WTC11 (cell line): ENCODE measurements at regions of chr15 and their contacts with region 1.

Region 1: DNA sequence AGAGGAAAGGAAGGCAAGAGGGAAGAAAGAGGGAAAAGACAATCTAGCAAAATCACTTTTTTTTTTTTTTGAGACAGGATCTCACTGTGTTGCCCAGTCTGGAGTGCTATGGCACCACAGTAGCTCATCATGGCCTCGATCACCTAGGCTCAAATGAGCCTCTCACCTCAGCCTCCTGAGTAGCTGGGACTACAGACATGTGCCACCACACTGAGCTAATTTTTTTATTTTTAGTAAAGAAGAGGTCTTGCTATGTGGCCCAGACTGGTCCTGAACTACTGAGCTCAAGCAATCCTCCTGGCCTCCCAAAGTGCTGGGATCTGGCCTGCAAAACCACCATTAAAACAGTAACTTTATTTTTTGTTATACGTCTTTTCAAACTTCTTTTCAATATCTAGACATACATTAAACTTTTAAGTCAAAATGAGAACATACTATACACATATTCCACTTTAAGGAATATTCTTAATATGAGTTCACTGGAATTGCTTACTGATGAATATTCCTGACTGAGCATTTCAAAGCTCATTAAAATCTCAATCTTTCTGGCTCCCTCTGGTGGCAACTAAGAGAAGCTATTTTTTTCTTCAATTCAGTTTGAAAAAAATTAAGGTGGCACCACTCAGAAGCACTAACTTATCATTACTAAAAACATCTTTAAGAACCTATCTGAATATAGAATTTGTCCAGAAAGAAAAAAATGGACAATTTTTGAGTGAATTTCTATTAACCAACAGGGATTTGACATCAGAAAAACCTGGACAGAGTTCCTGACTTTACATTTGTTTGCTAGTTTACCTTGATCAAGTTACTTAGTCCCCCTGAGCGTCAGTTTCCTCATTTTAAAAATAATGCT is 40.9 kb downstream of the UACA start:
- DNase-seq: no peak
- ATAC-seq: no peak
- H3K4me3 Mint-ChIP-seq: no peak overlapping the region
- H3K27ac Mint-ChIP-seq: no peak overlapping the region
- H3K4me1 Mint-ChIP-seq: peaks cover 12% of the 10 kb centered on the region
- H3K27me3 Mint-ChIP-seq: no peaks in the 10 kb centered on the region
- CTCF ChIP-seq: peak; percentile 62

Region 2: GRCh38 chr15:70569091-70569621 is 153.3 kb before region 1 on chr15:
- CTCF ChIA-PET with region 1: interaction called, 19 read pairs
- POLR2A ChIA-PET with region 1: no interaction called
- DNase-seq: no peak
- ATAC-seq: peak; percentile 71
- H3K4me3 Mint-ChIP-seq: no peak overlapping the region
- H3K27ac Mint-ChIP-seq: no peak overlapping the region
- H3K4me1 Mint-ChIP-seq: peaks cover 6% of the 10 kb centered on the region
- H3K27me3 Mint-ChIP-seq: no peaks in the 10 kb centered on the region
- CTCF ChIP-seq: no peak

Region 3: GRCh38 chr15:70613271-70613670 is 109.2 kb before region 1 on chr15:
- CTCF ChIA-PET with region 1: no interaction called
- POLR2A ChIA-PET with region 1: no interaction called
- DNase-seq: no peak
- ATAC-seq: no peak
- H3K4me3 Mint-ChIP-seq: no peak overlapping the region
- H3K27ac Mint-ChIP-seq: no peak overlapping the region
- H3K4me1 Mint-ChIP-seq: peaks cover 19% of the 10 kb centered on the region
- H3K27me3 Mint-ChIP-seq: peaks cover 2% of the 10 kb centered on the region; the same call in 1 of the 2 replicates
- CTCF ChIP-seq: no peak

Region 4: DNA sequence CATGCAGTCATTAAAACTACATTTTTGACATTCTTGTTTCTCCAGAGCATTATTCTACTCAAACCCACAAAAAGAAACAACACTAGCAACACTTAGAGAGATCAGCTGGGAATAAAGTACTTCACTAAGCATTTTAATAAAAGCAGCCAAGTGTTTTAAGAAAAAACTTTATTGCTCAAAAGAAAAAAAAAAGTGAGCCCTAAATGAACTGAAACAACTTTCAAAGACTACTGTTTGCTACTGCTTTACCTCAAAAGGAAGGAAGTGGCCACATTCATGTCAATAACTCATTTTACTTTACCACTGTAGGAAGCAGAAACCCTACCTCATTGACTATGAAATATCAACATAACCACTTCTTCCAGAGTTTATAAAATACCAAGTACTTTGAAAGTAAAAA is 50.4 kb before region 1 on chr15:
- CTCF ChIA-PET with region 1: interaction called, 15 read pairs
- POLR2A ChIA-PET with region 1: no interaction called
- DNase-seq: no peak
- ATAC-seq: no peak
- H3K4me3 Mint-ChIP-seq: no peak overlapping the region
- H3K27ac Mint-ChIP-seq: peak overlapping the region; percentile 25; the same call in 1 of the 2 replicates
- H3K4me1 Mint-ChIP-seq: peaks cover 7% of the 10 kb centered on the region
- H3K27me3 Mint-ChIP-seq: no peaks in the 10 kb centered on the region
- CTCF ChIP-seq: no peak

Region 5: GRCh38 chr15:70690491-70691257 is 31.8 kb before region 1 on chr15:
- CTCF ChIA-PET with region 1: interaction called, 16 read pairs
- POLR2A ChIA-PET with region 1: no interaction called
- DNase-seq: no peak
- ATAC-seq: no peak
- H3K4me3 Mint-ChIP-seq: no peak overlapping the region
- H3K27ac Mint-ChIP-seq: peak overlapping the region; percentile 38; the same call in 1 of the 2 replicates
- H3K4me1 Mint-ChIP-seq: peaks cover 13% of the 10 kb centered on the region
- H3K27me3 Mint-ChIP-seq: no peaks in the 10 kb centered on the region; the same call in 1 of the 2 replicates
- CTCF ChIP-seq: no peak

Region 6: DNA sequence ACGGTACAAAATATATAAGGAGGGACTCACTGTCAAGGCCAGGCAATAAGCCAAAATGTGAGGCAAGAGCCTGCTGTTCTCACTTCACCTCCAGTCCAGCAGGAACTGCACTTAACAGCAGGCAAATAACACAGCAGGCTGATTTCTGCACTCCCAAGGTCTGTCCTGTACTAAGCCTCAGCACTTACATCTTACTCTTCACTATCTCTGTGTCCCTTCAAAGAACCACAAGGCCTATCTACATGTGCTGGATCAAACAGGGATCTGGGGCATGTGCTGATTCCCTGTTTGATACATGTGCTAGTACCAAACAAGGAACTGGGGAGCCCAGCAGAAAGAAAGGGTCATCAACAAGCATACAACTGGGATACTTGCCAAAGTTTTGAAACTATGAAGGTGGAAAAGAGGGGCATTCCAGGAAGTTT is 18.6 kb after region 1 on chr15:
- CTCF ChIA-PET with region 1: interaction called, 21 read pairs
- POLR2A ChIA-PET with region 1: no interaction called
- DNase-seq: no peak
- ATAC-seq: no peak
- H3K4me3 Mint-ChIP-seq: no peak overlapping the region
- H3K27ac Mint-ChIP-seq: no peak overlapping the region
- H3K4me1 Mint-ChIP-seq: peaks cover 21% of the 10 kb centered on the region
- H3K27me3 Mint-ChIP-seq: no peaks in the 10 kb centered on the region
- CTCF ChIP-seq: no peak

Region 7: DNA sequence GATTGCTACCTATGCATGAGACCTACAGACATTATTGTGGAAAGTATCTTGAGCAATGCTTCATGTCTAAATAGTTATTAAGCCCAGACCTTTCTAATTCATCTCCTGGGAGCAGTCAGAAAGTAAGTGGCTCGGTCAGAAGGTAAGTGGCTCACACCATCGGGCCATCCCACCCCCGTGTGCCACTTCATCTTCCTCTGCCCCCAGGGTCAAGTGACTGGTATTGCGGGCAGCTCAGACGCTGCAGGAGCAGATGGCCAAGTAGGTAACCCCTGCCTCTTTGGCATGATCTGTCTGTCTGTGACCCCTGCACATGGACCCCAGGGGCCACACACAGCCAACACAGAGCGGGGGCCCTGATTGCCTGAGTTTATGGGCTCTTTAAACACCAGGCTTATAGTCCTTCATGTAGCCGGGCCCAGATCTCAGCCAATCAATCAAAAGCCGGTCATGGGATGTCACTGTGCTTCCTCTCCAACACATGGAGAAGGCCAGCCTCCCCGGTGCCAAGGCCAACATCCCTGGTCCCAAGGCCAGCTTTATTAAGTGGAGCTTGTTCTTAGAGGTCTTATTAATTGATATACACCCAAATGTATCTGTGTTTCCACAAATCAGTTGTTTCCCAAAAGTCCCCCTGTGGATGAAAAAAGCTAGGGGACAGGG is 88.6 kb after region 1 on chr15:
- CTCF ChIA-PET with region 1: interaction called, 20 read pairs
- POLR2A ChIA-PET with region 1: interaction called, 7 read pairs
- DNase-seq: no peak
- ATAC-seq: peak; percentile 56
- H3K4me3 Mint-ChIP-seq: no peak overlapping the region
- H3K27ac Mint-ChIP-seq: no peak overlapping the region
- H3K4me1 Mint-ChIP-seq: peaks cover 9% of the 10 kb centered on the region
- H3K27me3 Mint-ChIP-seq: no peaks in the 10 kb centered on the region; the same call in 1 of the 2 replicates
- CTCF ChIP-seq: no peak

Region 8: DNA sequence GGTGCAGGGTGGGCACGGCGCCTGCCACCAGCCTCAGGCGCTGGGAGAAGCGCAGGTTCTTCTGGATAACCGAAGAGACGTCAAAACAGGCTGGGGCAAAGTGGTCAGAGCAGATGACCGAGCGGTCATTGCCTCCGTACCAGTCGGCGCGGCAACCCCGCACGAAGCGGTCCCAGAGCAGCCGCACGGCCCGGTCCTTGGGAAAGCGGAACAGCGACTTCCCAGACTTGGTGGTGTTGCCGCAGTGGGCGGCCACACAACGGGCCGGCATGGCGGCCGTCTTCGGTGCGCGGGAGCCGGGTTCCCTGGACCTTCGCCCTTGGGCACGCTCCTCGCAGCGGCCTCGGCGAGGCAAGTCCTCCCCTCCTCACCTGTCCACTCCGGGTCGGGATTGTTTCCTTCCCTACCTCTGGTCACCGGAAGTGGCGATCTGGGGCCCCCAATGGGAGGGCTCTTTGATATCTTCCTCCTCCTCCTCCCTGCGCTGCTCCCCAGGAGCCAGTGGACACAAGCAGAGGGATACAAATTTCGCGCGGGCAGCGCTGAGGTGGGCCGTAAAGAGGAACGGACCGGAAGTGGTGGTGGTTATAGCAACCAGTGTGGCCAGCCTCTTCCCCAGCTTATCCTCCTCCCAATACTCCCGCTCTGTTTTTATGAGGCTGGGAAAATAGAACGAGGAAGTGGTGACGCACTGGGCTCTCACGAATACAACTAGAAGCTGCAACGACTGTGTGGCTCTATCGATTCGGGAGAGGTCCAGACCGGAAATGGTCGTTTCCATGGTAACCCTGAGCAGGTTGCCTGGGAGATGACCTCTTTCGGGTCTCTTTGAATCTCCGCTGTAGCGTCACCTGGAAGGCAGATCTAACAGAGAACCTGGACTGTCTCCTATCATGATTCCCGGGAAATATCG is 169.8 kb after region 1 on chr15 and contains the starts of genes LRRC49 and THAP10:
- CTCF ChIA-PET with region 1: no interaction called
- POLR2A ChIA-PET with region 1: no interaction called
- DNase-seq: peak; percentile 86
- ATAC-seq: peak; percentile 94
- H3K4me3 Mint-ChIP-seq: peak within 1 kb of the TSS; percentile 98
- H3K27ac Mint-ChIP-seq: peak within 1 kb of the TSS; percentile 97
- H3K4me1 Mint-ChIP-seq: peaks cover 16% of the 10 kb centered on the region
- H3K27me3 Mint-ChIP-seq: no peaks in the 10 kb centered on the region
- CTCF ChIP-seq: no peak
- total RNA-seq, gene LRRC49: 6.8 to 9.2 TPM (median 6.9 TPM) in 3 replicates
- total RNA-seq, gene THAP10: 2.6 to 3.6 TPM (median 3.4 TPM) in 3 replicates